ENCODE measurements at regions of chr17 and their contacts with region 1.

Region 1: DNA sequence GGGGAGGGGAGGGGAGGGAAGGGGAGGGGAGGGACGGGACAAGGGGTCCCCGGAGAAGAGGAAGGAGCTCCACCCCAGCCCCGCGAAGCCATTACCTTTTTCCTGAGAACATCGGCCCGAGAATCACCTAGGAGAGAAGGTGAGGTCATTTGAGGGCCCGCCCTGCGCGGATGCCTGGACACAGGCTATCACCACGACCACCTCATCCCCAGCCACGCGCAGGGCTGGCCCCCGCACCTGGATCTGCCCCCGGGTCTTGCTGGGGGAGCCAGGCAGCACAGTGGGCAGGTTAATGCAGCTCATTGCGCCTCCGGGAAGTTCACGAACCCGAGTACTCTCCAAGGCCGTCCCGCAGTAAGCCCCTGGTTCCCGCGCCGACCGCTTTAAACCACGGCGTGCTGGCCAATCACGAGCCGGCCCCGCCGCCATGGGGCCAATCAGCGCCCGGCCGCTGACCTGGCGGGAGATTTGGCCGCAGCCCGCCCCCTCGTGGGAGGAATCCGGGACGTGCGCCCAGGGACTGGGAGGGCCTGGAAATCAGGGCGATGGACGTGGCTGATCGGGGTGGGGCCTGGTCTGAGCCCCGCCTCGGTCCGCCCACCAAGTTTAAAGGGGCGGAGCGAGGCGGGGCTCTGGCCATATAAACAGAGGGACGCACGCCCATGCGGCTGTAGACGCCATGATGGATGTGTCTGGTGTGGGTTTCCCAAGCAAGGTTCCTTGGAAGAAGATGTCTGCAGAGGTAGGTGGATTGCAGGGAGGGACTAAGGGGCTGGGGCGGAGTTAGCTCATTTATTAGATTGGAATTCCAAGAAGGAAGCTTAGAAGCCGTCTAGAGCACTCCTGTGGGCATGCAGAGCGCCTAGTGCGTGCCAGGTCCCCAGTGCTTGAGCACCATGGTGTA is at the starts of genes AFMID and TK1:
- DNase-seq: peak; percentile 98 to 99 (median 98)
- ATAC-seq: peak; percentile 94
- H3K4me3 ChIP-seq: peak within 1 kb of the TSS; percentile 86
- H3K27ac ChIP-seq: peak within 1 kb of the TSS; percentile 89
- H3K4me1 ChIP-seq: peaks cover 22 to 54% of the 10 kb centered on the region in 2 experiments
- H3K27me3 ChIP-seq: no peaks in the 10 kb centered on the region
- CTCF ChIP-seq: peak; percentile 70 to 82 (median 77)
- EP300 ChIP-seq: no peak
- POLR2A ChIP-seq: peak; percentile 97
- RAD21 ChIP-seq: peak; percentile 25 to 28; a peak in 2 of 4 replicates
- polyA plus RNA-seq, gene AFMID: 80.3 to 188 TPM
- polyA plus RNA-seq, gene TK1: 8.4 to 29.9 TPM

Region 2: GRCh38 chr17:78019367-78019975 is 167.5 kb before region 1 on chr17:
- CTCF ChIA-PET with region 1: interaction called, 4 read pairs
- POLR2A ChIA-PET with region 1: no interaction called
- in situ Hi-C with region 1: no loop called
- intact Hi-C with region 1: loop called (anchors 1 kb)
- DNase-seq: peak in 2 of 4 experiments; percentile 23 to 66
- ATAC-seq: peak; percentile 64
- H3K4me3 ChIP-seq: no peak overlapping the region
- H3K27ac ChIP-seq: no peak overlapping the region; the same call in 2 of the 3 replicates
- H3K4me1 ChIP-seq: peaks cover 11 to 34% of the 10 kb centered on the region in 2 experiments; a peak in 4 of 5 replicates
- H3K27me3 ChIP-seq: no peaks in the 10 kb centered on the region
- CTCF ChIP-seq: peak; percentile 38 to 83 (median 60); a peak in 4 of 6 replicates
- EP300 ChIP-seq: 0 out of 2 replicates have a peak, but pooled peaks have one; percentile 5
- POLR2A ChIP-seq: no peak
- RAD21 ChIP-seq: peak; percentile 67 to 82

Region 3: DNA sequence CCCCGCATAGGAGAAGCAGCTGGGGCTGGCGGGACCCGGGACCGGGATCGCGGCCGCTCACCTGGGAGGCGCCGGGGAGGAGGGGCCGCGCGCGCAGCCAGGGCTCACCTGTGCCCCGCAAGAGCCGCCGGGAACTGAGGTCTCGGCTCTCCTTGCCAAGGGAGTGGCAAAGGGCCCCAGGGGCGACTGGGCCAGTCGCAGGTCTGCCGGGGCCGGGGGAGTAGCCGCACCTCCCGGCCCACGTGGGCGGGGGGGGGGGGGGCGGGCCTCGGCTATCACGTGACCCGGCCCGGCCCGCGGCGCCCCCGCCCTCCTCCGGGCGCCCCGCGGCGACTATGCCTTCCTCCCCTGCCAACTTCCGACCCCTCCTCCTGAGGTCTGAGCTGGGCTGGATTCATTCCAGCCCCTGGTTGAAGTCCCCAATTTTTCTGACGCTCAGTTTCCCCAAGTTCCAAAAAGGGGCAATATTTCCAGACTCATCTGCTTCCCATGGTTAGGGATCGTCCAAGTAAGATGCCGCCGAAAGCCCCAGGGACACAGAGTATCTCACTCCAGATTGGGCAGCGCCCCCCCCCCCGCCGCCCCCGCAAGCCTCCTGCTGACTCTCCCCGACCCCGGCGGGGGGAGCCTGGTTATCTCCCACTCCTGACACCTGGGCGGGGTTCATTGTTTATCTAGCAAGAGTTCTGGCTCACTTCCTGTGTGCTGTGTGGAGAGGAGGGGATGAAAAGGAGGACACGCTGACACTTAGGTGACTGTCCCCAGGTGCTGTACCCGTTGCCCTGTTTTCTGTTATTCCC is 58.2 kb before region 1 on chr17 and contains the start of gene TMC6:
- CTCF ChIA-PET with region 1: no interaction called
- POLR2A ChIA-PET with region 1: interaction called, 14 read pairs
- in situ Hi-C with region 1: no loop called
- intact Hi-C with region 1: no loop called
- DNase-seq: peak; percentile 93 to 99 (median 96)
- ATAC-seq: peak; percentile 75
- H3K4me3 ChIP-seq: peak within 1 kb of the TSS; percentile 98
- H3K27ac ChIP-seq: peak within 1 kb of the TSS; percentile 81
- H3K4me1 ChIP-seq: peaks cover 32 to 92% of the 10 kb centered on the region in 2 experiments
- H3K27me3 ChIP-seq: no peaks in the 10 kb centered on the region
- CTCF ChIP-seq: no peak
- EP300 ChIP-seq: peak; percentile 92
- POLR2A ChIP-seq: peak; percentile 81
- RAD21 ChIP-seq: no peak
- polyA plus RNA-seq, gene TMC6: 4.1 to 8.2 TPM

Region 4: GRCh38 chr17:78168242-78168902 is 18.6 kb before region 1 on chr17 and contains the start of gene SYNGR2:
- CTCF ChIA-PET with region 1: no interaction called
- POLR2A ChIA-PET with region 1: interaction called, 16 read pairs
- in situ Hi-C with region 1: no loop called
- intact Hi-C with region 1: no loop called
- DNase-seq: peak; percentile 94 to 95 (median 94)
- ATAC-seq: peak; percentile 86
- H3K4me3 ChIP-seq: peak within 1 kb of the TSS; percentile 92
- H3K27ac ChIP-seq: peak within 1 kb of the TSS; percentile 83
- H3K4me1 ChIP-seq: peaks cover 16 to 65% of the 10 kb centered on the region in 2 experiments; a peak in 4 of 5 replicates
- H3K27me3 ChIP-seq: no peaks in the 10 kb centered on the region
- CTCF ChIP-seq: no peak; a peak in 1 of 6 replicates
- EP300 ChIP-seq: no peak
- POLR2A ChIP-seq: no peak; the same call in 1 of the 2 replicates
- RAD21 ChIP-seq: no peak; a peak in 2 of 4 replicates
- polyA plus RNA-seq, gene SYNGR2: 1.4 to 7.6 TPM

Region 5: GRCh38 chr17:78197147-78197832 is 10.3 kb after region 1 on chr17:
- CTCF ChIA-PET with region 1: no interaction called
- POLR2A ChIA-PET with region 1: interaction called, 29 read pairs
- in situ Hi-C with region 1: no loop called
- intact Hi-C with region 1: no loop called
- DNase-seq: no peak
- ATAC-seq: no peak
- H3K4me3 ChIP-seq: no peak overlapping the region
- H3K27ac ChIP-seq: no peak overlapping the region
- H3K4me1 ChIP-seq: peaks cover 0 to 3% of the 10 kb centered on the region in 2 experiments; a peak in 2 of 5 replicates
- H3K27me3 ChIP-seq: no peaks in the 10 kb centered on the region
- CTCF ChIP-seq: no peak
- EP300 ChIP-seq: no peak
- POLR2A ChIP-seq: no peak
- RAD21 ChIP-seq: no peak

Region 6: DNA sequence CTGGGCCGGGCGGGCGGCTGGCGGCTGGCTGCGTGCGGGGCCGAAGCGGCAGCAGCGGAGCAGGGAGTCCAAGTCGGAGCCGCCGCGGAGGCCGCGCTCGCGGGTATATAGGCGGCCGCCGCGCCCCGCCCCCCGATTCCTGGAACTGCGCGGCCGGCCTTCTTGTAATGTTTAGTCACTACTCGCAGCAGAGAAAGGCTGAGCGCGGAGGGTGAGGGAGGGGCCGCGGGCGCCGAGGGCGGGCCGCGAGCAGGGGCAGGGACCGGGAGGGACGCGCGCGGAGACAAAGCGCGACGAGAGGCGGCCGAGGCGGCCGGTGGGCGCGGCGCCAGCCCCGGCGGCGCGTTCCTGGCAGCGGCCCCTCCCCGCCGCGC is 173.0 kb after region 1 on chr17 and contains the start of gene SOCS3:
- CTCF ChIA-PET with region 1: no interaction called
- POLR2A ChIA-PET with region 1: no interaction called
- in situ Hi-C with region 1: no loop called
- intact Hi-C with region 1: no loop called
- DNase-seq: peak; percentile 95 to 99 (median 96)
- ATAC-seq: peak; percentile 87
- H3K4me3 ChIP-seq: peak within 1 kb of the TSS; percentile 90
- H3K27ac ChIP-seq: peak within 1 kb of the TSS; percentile 84
- H3K4me1 ChIP-seq: peaks cover 42 to 63% of the 10 kb centered on the region in 2 experiments
- H3K27me3 ChIP-seq: 0 out of 5 replicates have a peak, but pooled peaks cover 0 to under 1% of the 10 kb centered on the region in 2 experiments
- CTCF ChIP-seq: no peak
- EP300 ChIP-seq: peak; percentile 63; the same call in 1 of the 2 replicates
- POLR2A ChIP-seq: peak; percentile 76
- RAD21 ChIP-seq: peak in 1 of 2 experiments; percentile 4; a peak in 2 of 4 replicates
- polyA plus RNA-seq, gene SOCS3: 0.56 to 0.92 TPM

Region 7: GRCh38 chr17:78474614-78475146 is 287.7 kb after region 1 on chr17:
- CTCF ChIA-PET with region 1: no interaction called
- POLR2A ChIA-PET with region 1: no interaction called
- in situ Hi-C with region 1: no loop called
- intact Hi-C with region 1: no loop called
- DNase-seq: no peak
- ATAC-seq: no peak; the same call in 2 of the 3 replicates
- H3K4me3 ChIP-seq: no peak overlapping the region
- H3K27ac ChIP-seq: no peak overlapping the region
- H3K4me1 ChIP-seq: peaks cover 0 to 3% of the 10 kb centered on the region in 2 experiments; a peak in 1 of 5 replicates
- H3K27me3 ChIP-seq: peaks cover 54 to 61% of the 10 kb centered on the region in 2 experiments
- CTCF ChIP-seq: no peak
- EP300 ChIP-seq: no peak
- POLR2A ChIP-seq: no peak
- RAD21 ChIP-seq: no peak

Measured in K562 (cell line).